G401 (cell line): ENCODE measurements at regions of chr3 and their contacts with region 1.

Region 1: DNA sequence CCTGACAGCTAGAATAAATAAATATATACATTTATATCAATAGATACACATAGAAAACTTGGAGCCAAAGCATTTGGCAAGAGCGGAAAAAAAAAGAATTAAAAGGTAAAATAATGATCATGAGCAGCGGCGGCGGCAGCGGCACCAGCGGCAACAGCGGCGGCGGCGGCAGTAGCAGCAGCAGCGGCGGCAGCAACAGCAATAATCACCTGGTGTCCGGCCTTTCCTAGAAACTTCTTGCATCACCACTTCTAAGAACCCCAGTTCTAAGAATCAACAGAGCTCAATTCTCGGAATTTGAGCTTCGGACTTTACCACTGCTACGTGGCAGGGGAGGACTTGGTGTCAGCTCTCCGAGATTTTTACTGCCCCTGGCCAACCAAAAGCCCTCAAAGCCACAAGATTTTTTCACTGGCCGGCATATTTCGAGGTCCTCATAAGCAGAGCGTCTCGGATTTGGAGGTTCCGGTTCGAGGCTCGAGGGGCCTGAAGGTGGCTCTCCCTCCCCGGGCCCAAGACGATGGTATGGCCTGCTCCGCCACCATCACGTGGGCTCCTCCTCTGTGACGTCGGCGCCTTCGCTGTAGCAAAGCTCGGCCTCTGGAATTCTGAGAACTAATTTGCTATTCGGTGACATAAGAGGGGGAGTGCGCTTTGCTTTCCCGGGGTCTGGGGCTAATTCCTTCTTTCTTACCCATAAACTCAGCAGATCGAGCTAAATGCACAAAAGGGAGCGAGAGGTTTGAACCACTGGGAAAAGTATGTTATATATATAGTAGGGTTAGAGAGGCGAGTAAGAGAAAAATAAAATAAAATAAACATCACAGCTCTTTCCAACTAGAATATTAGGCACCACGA is at the start of gene BCL6:
- DNase-seq: peak; percentile 97
- total RNA-seq, gene BCL6: 0.18 and 1.3 TPM in 2 replicates

Region 2: GRCh38 chr3:187783098-187783497 is 37.7 kb after region 1 on chr3:
- in situ Hi-C with region 1: no loop called
- DNase-seq: peak; percentile 94

Region 3: GRCh38 chr3:188507244-188507720 is 761.9 kb after region 1 on chr3:
- in situ Hi-C with region 1: loop called (anchors 25 kb)
- DNase-seq: no peak

Region 4: GRCh38 chr3:188954590-188955208 is 1209.3 kb after region 1 on chr3:
- in situ Hi-C with region 1: loop called (anchors 5 kb)
- DNase-seq: peak; percentile 94